Mammary epithelial cell (primary cell): ENCODE measurements at regions of chr17 and their contacts with region 1.

Region 1: GRCh38 chr17:8954339-8954738 is 11.2 kb downstream of the PIK3R5 start:
- DNase-seq: no peak
- H3K4me3 ChIP-seq: no peak overlapping the region
- H3K27ac ChIP-seq: no peak overlapping the region
- H3K4me1 ChIP-seq: no peaks in the 10 kb centered on the region
- H3K27me3 ChIP-seq: no peaks in the 10 kb centered on the region
- CTCF ChIP-seq: no peak

Region 2: DNA sequence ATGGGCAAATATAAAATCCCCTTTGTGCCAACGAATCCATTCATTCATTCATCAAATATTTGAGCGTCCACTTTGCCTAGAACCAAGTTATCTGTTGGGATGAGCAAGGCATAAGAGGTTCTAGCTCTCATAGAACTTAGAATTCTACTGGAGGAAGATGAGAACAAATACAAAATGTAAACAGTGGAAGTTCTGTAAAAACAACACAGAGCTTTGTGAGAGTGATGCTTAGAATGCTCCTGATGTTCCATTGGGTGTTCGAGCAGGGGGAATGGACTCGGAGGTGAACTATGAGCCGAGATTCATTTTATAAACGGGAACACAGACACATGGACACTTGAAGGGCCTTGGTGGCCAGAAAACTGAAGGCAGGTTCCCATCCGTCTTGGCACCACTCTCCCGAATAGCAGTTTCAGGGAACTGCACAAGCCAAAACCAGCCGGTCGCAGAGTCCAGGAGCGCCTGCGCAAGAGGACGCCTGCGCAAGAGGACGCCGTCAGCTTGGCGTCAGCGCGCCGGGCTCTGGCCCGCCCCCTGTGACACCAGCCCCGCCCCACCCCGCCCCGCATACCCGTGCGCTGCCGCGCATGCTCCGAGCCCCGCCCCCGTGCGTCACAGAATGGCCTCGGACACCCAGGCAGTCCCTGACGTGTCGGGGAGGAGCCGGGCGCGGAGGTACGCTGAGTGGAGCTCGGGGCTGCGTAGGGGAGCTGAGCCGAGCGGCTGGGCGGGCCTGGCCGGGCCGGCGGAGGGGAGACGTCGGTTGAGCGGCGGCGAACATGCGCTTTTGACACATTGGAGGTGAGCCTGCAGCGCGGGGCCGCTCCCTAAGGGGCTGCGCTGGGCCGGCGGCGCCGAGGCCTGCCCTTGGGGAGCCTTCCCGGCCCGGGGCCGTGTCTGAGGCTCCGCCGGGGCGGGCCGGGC is 518.8 kb before region 1 on chr17 and contains the start of gene NDEL1:
- CTCF ChIA-PET with region 1: no interaction called
- dilution Hi-C with region 1: no loop called
- in situ Hi-C with region 1: no loop called
- intact Hi-C with region 1: no loop called
- DNase-seq: peak; percentile 98
- H3K4me3 ChIP-seq: peak within 1 kb of the TSS; percentile 73 to 84 (median 82)
- H3K27ac ChIP-seq: peak within 1 kb of the TSS; percentile 99
- H3K4me1 ChIP-seq: peaks cover 15% of the 10 kb centered on the region
- H3K27me3 ChIP-seq: no peaks in the 10 kb centered on the region
- CTCF ChIP-seq: no peak
- total RNA-seq, gene NDEL1: 55.7 to 102 TPM

Region 3: DNA sequence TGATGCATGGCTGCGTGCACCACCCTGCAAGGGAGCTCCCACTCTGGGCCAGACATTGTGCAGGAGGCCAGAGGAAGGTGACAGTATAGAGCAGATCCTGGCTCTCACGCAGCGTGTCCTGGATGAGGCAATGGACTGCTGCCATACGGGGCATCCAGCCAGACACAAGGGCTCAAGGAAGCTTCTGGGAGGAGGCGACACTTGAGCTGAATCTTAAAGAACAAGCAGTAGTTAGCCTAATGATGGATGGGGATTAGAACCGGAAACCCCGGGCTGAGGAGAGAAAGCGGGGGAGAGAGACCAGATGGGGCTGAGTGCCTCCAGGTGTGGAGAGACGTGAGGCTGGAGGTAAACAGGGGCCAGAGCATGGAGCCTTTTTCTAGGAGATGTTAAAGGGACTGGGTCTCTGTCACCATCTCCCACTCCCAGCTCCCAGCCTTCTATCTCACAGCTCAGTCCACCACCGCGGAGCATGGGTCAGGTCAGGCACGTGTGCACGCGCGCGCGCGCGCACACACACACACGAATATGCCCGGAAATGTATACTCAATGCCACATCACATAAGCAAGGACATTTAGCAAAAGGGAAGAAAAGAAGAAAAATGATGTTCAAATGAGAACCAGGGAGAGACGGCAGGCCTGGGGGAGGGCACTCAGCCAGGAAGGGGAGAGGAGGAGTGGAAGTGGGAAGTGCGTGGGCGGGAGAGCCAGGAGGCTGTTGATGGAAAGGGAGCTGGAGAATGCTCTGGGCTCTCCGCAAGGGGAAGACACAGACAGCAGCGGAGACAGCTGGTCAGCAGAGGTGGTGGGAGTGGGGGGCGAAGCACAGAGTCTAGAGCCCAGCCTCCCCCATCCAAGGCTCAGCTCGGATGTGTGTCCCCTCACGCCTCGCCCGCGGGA is 255.9 kb before region 1 on chr17:
- CTCF ChIA-PET with region 1: no interaction called
- dilution Hi-C with region 1: no loop called
- in situ Hi-C with region 1: no loop called
- intact Hi-C with region 1: no loop called
- DNase-seq: no peak
- H3K4me3 ChIP-seq: no peak overlapping the region
- H3K27ac ChIP-seq: no peak overlapping the region
- H3K4me1 ChIP-seq: no peaks in the 10 kb centered on the region
- H3K27me3 ChIP-seq: no peaks in the 10 kb centered on the region
- CTCF ChIP-seq: no peak

Region 4: GRCh38 chr17:8894673-8895578 is 59.4 kb before region 1 on chr17:
- CTCF ChIA-PET with region 1: no interaction called
- dilution Hi-C with region 1: no loop called
- in situ Hi-C with region 1: no loop called
- intact Hi-C with region 1: no loop called
- DNase-seq: peak; percentile 55
- H3K4me3 ChIP-seq: no peak overlapping the region
- H3K27ac ChIP-seq: no peak overlapping the region
- H3K4me1 ChIP-seq: no peaks in the 10 kb centered on the region
- H3K27me3 ChIP-seq: no peaks in the 10 kb centered on the region
- CTCF ChIP-seq: peak; percentile 76 to 80

Region 5: DNA sequence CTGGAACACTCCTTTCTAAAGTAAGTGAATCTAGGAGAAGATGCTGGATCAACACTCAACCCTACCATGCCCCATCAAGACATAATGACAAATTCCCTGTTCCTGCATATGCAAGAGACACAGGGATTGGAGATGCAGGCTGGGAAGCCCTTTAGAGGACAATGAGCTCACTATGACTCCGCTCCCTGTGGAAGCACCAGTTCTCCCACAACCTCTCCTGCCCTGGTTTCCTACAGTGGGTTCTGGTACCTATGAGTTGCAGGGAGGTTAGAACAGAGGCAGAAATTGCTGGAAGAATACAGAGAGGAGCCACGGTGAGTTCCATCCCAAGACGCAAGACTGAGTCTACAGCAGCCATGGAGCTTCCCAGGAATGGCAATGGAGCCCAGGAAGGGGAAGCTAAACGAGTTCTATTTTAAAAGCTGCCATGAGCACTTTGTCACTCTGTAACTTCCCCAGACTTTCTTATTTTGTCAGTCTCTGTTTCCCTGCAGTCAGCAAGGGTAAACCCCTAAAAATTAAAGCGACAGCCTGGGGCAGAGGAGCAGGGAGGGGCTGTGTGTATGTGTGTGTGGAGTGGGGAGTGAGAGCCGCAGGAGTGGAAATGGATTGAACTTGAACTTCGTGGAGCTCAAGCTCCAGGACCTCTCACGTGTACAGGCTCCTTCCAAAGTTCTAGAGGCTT is 44.6 kb before region 1 on chr17:
- CTCF ChIA-PET with region 1: no interaction called
- dilution Hi-C with region 1: loop called (anchors 5 kb)
- in situ Hi-C with region 1: no loop called
- intact Hi-C with region 1: no loop called
- DNase-seq: no peak
- H3K4me3 ChIP-seq: no peak overlapping the region
- H3K27ac ChIP-seq: no peak overlapping the region
- H3K4me1 ChIP-seq: no peaks in the 10 kb centered on the region
- H3K27me3 ChIP-seq: no peaks in the 10 kb centered on the region
- CTCF ChIP-seq: no peak

Region 6: GRCh38 chr17:9016941-9017552 is 62.7 kb after region 1 on chr17:
- CTCF ChIA-PET with region 1: no interaction called
- dilution Hi-C with region 1: loop called (anchors 10 kb)
- in situ Hi-C with region 1: no loop called
- intact Hi-C with region 1: no loop called
- DNase-seq: no peak
- H3K4me3 ChIP-seq: no peak overlapping the region
- H3K27ac ChIP-seq: no peak overlapping the region
- H3K4me1 ChIP-seq: peaks cover 4% of the 10 kb centered on the region
- H3K27me3 ChIP-seq: peaks cover 7% of the 10 kb centered on the region
- CTCF ChIP-seq: no peak

Region 7: DNA sequence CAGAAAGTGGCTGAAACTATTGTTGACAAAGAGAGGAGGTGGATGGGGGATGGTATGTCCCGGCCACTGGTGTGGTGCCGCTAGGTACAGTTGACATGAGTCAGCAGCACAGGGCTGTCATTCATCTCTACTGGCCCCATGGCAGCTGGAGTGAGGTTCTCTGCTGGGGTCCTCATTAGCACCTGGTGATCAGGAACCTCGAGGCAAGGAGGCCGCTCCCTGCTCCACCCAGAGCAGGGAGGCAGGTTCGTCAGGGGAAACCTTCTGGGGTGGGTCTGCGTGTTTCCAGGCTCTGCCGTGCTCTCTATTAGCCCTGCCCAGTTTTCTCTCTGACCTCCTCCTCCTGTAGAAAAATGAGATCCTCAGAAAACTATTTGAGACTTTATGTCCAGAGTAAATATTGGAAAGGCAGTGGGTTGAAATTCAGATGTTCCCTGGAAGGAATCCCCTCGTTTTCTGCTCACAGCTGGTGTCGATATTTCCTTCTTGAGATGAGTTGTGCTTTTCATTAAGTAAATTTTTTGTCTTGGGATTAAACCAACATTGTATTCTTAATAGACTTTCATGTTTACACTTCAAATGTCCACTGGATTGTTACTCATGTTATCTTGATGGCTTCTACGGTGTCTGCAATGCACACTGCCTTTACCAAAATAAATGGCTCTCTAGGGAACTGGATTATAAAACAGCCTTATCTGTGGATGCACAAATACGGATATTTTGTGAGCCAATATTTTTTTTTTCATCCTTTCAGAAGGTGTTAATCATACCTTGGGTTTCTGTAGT is 74.1 kb after region 1 on chr17:
- CTCF ChIA-PET with region 1: no interaction called
- dilution Hi-C with region 1: no loop called
- in situ Hi-C with region 1: no loop called
- intact Hi-C with region 1: no loop called
- DNase-seq: no peak
- H3K4me3 ChIP-seq: no peak overlapping the region
- H3K27ac ChIP-seq: no peak overlapping the region
- H3K4me1 ChIP-seq: peaks cover 4% of the 10 kb centered on the region
- H3K27me3 ChIP-seq: no peaks in the 10 kb centered on the region
- CTCF ChIP-seq: no peak

Region 8: DNA sequence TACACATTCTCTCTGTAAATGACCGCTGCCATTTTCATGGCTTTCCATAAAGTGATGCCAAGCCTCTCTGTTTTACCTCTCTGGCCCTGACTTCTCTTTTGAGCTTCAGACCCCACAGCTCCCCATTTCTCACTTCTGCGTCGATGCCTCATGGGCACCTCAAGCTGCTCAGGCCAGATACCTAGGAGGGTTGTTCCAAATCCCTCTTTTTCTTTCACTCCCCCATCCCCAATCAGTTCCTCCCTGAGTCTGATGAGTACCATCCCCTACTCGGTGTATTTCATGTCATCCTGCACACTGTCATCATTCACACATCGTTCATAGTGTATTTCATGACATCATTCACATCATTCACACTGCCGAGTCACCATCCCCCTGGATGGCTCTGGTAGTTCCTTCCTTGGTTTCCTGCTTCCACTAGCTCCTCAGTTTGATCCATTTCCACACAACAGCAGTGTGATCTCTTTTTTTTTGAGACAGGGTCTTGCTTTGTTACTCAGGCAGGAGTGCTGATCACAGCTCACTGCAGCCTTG is 110.0 kb after region 1 on chr17:
- CTCF ChIA-PET with region 1: no interaction called
- dilution Hi-C with region 1: loop called (anchors 5 kb)
- in situ Hi-C with region 1: no loop called
- intact Hi-C with region 1: no loop called
- DNase-seq: no peak
- H3K4me3 ChIP-seq: no peak overlapping the region
- H3K27ac ChIP-seq: no peak overlapping the region
- H3K4me1 ChIP-seq: no peaks in the 10 kb centered on the region
- H3K27me3 ChIP-seq: no peaks in the 10 kb centered on the region
- CTCF ChIP-seq: no peak